Breast epithelium (tissue), 4 donors: ENCODE measurements at regions of chr22 and their contacts with region 1.

Region 1: GRCh38 chr22:29766632-29767170 is at the start of gene ZMAT5:
- DNase-seq: peak; percentile 95 to 96
- H3K4me3 ChIP-seq: peak within 1 kb of the TSS; percentile 91 to 98 (median 91)
- H3K27ac ChIP-seq: peak within 1 kb of the TSS; percentile 92
- H3K4me1 ChIP-seq: peaks cover 8 to 10% of the 10 kb centered on the region in 2 donors
- H3K27me3 ChIP-seq: no peaks in the 10 kb centered on the region
- CTCF ChIP-seq: no peak
- POLR2A ChIP-seq: peak; percentile 50
- total RNA-seq, gene ZMAT5: 22.5 to 26.2 (median 23.0) TPM

Region 2: DNA sequence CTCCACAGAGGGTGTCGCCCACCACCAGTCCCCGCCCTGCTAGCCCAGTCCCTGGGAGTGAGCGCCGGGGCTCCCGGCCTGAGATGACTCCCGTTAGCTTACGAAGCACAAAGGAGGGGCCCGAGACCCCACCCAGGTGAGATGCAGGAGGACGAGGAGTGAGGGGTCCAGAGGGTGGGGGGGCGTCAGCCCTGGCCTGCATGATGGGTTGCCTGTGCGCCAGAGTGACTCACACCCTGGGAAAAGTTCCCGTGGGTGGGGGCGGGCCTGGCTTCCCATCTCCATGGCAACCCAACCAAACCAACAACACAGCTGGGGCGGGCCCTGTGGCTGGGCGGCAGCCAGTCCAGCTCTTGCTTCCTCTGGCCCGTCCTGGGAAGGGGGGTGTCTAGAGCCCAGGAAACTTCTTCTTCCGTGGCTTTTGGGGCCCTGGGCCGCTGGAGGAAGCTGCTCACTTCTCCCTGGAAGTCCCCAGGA is 455.8 kb before region 1 on chr22:
- intact Hi-C with region 1: loop called (anchors 10 kb)
- DNase-seq: peak; percentile 97
- H3K4me3 ChIP-seq: peak overlapping the region; percentile 32 to 60 (median 35)
- H3K27ac ChIP-seq: peak overlapping the region; percentile 89 to 93
- H3K4me1 ChIP-seq: peaks cover 36 to 37% of the 10 kb centered on the region in 2 donors
- H3K27me3 ChIP-seq: peaks cover 0 to 18% of the 10 kb centered on the region in 2 donors
- CTCF ChIP-seq: no peak
- POLR2A ChIP-seq: no peak